Activated CD8-positive, alpha-beta T cell treated with anti-CD3 and anti-CD28 coated beads for 36 hours (primary cell): ENCODE measurements at regions of chr9 and their contacts with region 1.

Region 1: DNA sequence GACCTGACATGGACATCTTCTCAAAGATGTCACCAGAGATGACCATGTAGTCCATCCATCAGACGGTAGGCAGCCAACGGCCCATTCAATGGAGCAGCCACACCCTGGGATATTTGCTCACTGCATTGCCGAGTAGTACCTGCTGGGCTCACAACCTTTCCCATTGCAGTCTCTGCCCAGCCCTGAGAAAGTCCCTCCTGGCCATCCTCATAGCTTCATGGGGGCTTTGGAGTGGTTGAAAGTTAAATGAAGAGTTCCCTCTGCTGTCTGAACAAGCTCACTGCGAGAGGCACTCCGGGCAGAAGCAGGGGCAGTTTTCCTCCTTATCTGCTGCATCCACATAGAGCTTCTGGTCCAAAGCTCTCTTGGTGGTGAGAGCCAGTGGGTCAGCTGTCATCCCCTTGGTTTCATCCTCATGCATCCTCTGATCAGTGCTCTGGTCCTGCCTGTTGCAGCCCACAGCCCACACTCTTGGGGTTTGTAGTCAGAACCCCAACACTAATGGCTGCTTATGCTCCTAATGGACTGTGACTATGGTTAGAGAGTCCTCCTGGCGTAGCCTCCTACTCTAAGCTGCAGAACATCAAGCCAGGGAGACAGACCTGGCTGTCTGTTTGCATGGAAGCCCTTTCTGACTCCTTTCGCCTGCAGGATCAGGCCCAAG is 23.4 kb downstream of the TNFSF8 start:
- DNase-seq: peak; percentile 48
- ATAC-seq: peak; percentile 22
- H3K4me3 Mint-ChIP-seq: no peak overlapping the region
- H3K27ac Mint-ChIP-seq: peak overlapping the region; percentile 96
- H3K4me1 Mint-ChIP-seq: peaks cover 47% of the 10 kb centered on the region
- H3K27me3 Mint-ChIP-seq: no peaks in the 10 kb centered on the region
- CTCF ChIP-seq: peak; percentile 63

Region 2: DNA sequence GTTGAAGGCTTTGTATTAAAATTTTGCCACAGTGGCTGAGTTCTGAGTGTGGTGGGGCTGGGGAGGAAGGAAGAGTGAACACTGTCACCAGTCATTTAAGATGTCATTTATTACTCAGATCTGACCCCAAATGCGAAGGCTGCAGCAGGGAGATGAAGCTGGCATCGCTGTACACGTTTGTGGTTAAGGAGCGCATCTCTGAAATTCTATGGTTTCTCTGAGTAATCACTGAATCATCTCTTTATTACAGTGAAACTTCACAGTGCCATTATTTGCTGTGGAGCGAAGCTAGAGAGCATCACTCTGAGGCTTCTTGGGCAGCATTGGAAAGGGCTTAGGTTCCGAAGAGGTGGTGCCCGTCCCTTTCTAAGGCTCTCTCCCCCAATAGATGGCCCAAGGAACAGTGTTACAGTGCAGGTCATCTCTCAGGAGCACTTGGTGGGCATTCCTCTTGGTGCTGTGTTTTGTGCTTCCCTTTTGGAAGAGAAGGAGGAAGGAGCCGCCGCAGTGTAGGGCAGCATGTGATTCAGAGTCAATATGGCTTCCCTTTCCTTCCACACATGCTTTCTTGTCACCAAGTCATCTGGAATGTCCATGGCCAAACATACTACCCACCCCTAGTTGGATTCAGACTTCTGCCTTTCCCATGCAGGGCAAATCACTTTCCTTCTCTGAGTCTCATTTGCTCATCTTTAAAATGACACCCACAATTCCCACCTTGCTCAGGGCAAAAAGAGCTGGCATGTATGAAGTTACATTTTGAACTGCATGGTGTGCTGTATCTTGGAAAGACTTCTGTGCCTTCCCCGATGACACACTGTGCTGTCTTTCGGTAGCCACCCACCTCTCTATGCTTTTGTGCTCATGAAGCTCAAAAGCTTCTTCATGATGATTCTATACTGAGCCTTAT is 215.7 kb before region 1 on chr9:
- CTCF ChIA-PET with region 1: interaction called, 9 read pairs
- POLR2A ChIA-PET with region 1: interaction called, 11 read pairs
- intact Hi-C with region 1: loop called (anchors 5 kb)
- DNase-seq: peak; percentile 89
- ATAC-seq: peak; percentile 75
- H3K4me3 Mint-ChIP-seq: peak overlapping the region; percentile 44
- H3K27ac Mint-ChIP-seq: peak overlapping the region; percentile 97
- H3K4me1 Mint-ChIP-seq: peaks cover 88% of the 10 kb centered on the region
- H3K27me3 Mint-ChIP-seq: no peaks in the 10 kb centered on the region
- CTCF ChIP-seq: no peak

Region 3: GRCh38 chr9:114738581-114739316 is 168.3 kb before region 1 on chr9:
- CTCF ChIA-PET with region 1: interaction called, 137 read pairs
- POLR2A ChIA-PET with region 1: interaction called, 3 read pairs
- intact Hi-C with region 1: loop called (anchors 2 kb)
- DNase-seq: peak; percentile 80
- ATAC-seq: peak; percentile 71
- H3K4me3 Mint-ChIP-seq: no peak overlapping the region
- H3K27ac Mint-ChIP-seq: peak overlapping the region; percentile 94
- H3K4me1 Mint-ChIP-seq: peaks cover 53% of the 10 kb centered on the region
- H3K27me3 Mint-ChIP-seq: no peaks in the 10 kb centered on the region
- CTCF ChIP-seq: peak; percentile 75

Region 4: DNA sequence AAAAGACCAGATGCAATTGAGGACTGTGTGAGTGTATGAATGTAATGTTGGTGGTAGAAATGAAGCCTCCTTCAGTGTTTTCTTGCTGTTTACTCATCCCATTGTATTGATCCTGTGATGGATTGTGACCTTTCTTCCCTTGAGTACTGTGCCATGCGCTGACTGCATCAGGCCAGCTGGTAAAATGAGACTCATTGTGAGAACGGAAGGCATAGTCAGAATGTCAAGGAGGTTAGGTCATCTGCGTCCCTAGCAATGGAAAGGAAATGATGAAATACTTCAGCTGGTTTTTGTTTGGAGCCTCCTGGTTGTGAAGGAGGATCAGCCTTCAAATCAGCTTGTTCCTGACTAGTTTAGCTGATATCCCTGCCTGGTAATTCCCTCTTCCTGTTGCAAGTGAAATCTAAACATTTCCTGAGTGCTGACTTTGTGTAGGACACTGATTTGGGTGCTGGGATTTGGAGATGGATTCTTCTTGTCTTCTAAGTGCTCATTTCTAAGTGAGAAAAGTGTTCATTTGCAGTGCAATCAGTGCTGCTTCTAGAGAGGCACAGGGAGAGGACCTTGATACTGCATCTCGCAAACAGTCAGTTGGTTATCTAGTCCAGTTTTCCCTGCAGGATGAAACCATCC is 12.1 kb before region 1 on chr9:
- CTCF ChIA-PET with region 1: interaction called, 15 read pairs
- POLR2A ChIA-PET with region 1: interaction called, 5 read pairs
- intact Hi-C with region 1: no loop called
- DNase-seq: peak; percentile 78
- ATAC-seq: peak; percentile 65
- H3K4me3 Mint-ChIP-seq: no peak overlapping the region
- H3K27ac Mint-ChIP-seq: peak overlapping the region; percentile 86
- H3K4me1 Mint-ChIP-seq: peaks cover 54% of the 10 kb centered on the region
- H3K27me3 Mint-ChIP-seq: no peaks in the 10 kb centered on the region
- CTCF ChIP-seq: no peak

Region 5: GRCh38 chr9:114930056-114930812 is 23.2 kb after region 1 on chr9 and contains the start of gene TNFSF8:
- CTCF ChIA-PET with region 1: interaction called, 29 read pairs
- POLR2A ChIA-PET with region 1: interaction called, 21 read pairs
- intact Hi-C with region 1: no loop called
- DNase-seq: peak; percentile 91
- ATAC-seq: peak; percentile 87
- H3K4me3 Mint-ChIP-seq: peak within 1 kb of the TSS; percentile 89
- H3K27ac Mint-ChIP-seq: peak within 1 kb of the TSS; percentile 98
- H3K4me1 Mint-ChIP-seq: peaks cover 47% of the 10 kb centered on the region
- H3K27me3 Mint-ChIP-seq: no peaks in the 10 kb centered on the region
- CTCF ChIP-seq: no peak
- total RNA-seq, gene TNFSF8: 21.7 to 23.9 TPM

Region 6: GRCh38 chr9:115013998-115014397 is 107.0 kb after region 1 on chr9:
- CTCF ChIA-PET with region 1: interaction called, 77 read pairs
- POLR2A ChIA-PET with region 1: interaction called, 3 read pairs
- intact Hi-C with region 1: loop called (anchors 5 kb)
- DNase-seq: peak; percentile 80
- ATAC-seq: peak; percentile 87
- H3K4me3 Mint-ChIP-seq: no peak overlapping the region
- H3K27ac Mint-ChIP-seq: peak overlapping the region; percentile 36
- H3K4me1 Mint-ChIP-seq: peaks cover 40% of the 10 kb centered on the region
- H3K27me3 Mint-ChIP-seq: no peaks in the 10 kb centered on the region
- CTCF ChIP-seq: peak; percentile 72

Region 7: DNA sequence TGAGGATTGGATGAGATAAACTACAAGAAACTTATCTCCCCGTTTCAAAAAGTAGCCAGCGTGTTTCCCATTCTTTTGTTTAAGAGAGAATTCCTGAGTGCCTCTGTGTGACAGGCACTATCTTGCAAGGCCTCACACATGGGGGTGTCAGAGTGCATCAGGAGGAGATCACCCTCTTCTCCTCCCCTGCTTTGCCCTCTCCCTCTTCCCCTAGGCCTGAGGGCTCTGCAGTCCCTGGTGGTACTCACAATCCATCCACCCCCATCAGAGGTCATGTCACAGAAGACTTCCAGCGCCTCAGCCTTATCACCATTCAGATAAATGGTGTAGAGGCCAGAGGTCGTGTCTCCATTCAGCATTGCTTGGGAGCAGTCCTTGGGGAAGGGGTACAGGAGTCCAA is 123.0 kb after region 1 on chr9:
- CTCF ChIA-PET with region 1: no interaction called
- POLR2A ChIA-PET with region 1: no interaction called
- intact Hi-C with region 1: no loop called
- DNase-seq: no peak
- ATAC-seq: no peak
- H3K4me3 Mint-ChIP-seq: no peak overlapping the region
- H3K27ac Mint-ChIP-seq: no peak overlapping the region
- H3K4me1 Mint-ChIP-seq: peaks cover 4% of the 10 kb centered on the region
- H3K27me3 Mint-ChIP-seq: peaks cover 7% of the 10 kb centered on the region
- CTCF ChIP-seq: no peak